ENCODE measurements at regions of chr3 and their contacts with region 1.

Region 1: GRCh38 chr3:42790714-42791229 is 13.5 kb downstream of the HIGD1A start:
- DNase-seq: no peak
- H3K4me3 ChIP-seq: no peak overlapping the region
- H3K27ac ChIP-seq: no peak overlapping the region
- H3K4me1 ChIP-seq: peaks cover 0 to 3% (median 0%) of the 10 kb centered on the region in 4 experiments; a peak in 2 of 7 replicates
- H3K27me3 ChIP-seq: no peaks in the 10 kb centered on the region
- CTCF ChIP-seq: no peak
- EP300 ChIP-seq: no peak
- POLR2A ChIP-seq: no peak
- RAD21 ChIP-seq: no peak

Region 2: GRCh38 chr3:42804106-42804830 is 13.5 kb after region 1 on chr3 and contains the start of gene HIGD1A:
- CTCF ChIA-PET with region 1: interaction called, 6 read pairs
- POLR2A ChIA-PET with region 1: interaction called, 19 read pairs
- DNase-seq: peak; percentile 87 to 93
- H3K4me3 ChIP-seq: peak within 1 kb of the TSS; percentile 85 to 96 (median 88)
- H3K27ac ChIP-seq: peak within 1 kb of the TSS; percentile 68
- H3K4me1 ChIP-seq: peaks cover 0 to 6% (median 4%) of the 10 kb centered on the region in 4 experiments; a peak in 4 of 7 replicates
- H3K27me3 ChIP-seq: peaks cover 0 to 9% (median 5%) of the 10 kb centered on the region in 4 experiments; a peak in 3 of 7 replicates
- CTCF ChIP-seq: no peak
- EP300 ChIP-seq: no peak; a peak in 1 of 3 replicates
- POLR2A ChIP-seq: peak; percentile 19 to 64; a peak in 2 of 3 replicates
- RAD21 ChIP-seq: no peak
- total RNA-seq, gene HIGD1A: 94.7 and 95.4 TPM in 2 replicates

Region 3: GRCh38 chr3:42914771-42915515 is 124.2 kb after region 1 on chr3:
- CTCF ChIA-PET with region 1: no interaction called
- POLR2A ChIA-PET with region 1: no interaction called
- DNase-seq: no peak
- H3K4me3 ChIP-seq: no peak overlapping the region
- H3K27ac ChIP-seq: no peak overlapping the region
- H3K4me1 ChIP-seq: no peaks in the 10 kb centered on the region
- H3K27me3 ChIP-seq: no peaks in the 10 kb centered on the region
- CTCF ChIP-seq: no peak
- EP300 ChIP-seq: no peak
- POLR2A ChIP-seq: no peak
- RAD21 ChIP-seq: no peak

Measured in H1 (cell line).